ENCODE measurements at regions of chr3 and their contacts with region 1.

Region 1: DNA sequence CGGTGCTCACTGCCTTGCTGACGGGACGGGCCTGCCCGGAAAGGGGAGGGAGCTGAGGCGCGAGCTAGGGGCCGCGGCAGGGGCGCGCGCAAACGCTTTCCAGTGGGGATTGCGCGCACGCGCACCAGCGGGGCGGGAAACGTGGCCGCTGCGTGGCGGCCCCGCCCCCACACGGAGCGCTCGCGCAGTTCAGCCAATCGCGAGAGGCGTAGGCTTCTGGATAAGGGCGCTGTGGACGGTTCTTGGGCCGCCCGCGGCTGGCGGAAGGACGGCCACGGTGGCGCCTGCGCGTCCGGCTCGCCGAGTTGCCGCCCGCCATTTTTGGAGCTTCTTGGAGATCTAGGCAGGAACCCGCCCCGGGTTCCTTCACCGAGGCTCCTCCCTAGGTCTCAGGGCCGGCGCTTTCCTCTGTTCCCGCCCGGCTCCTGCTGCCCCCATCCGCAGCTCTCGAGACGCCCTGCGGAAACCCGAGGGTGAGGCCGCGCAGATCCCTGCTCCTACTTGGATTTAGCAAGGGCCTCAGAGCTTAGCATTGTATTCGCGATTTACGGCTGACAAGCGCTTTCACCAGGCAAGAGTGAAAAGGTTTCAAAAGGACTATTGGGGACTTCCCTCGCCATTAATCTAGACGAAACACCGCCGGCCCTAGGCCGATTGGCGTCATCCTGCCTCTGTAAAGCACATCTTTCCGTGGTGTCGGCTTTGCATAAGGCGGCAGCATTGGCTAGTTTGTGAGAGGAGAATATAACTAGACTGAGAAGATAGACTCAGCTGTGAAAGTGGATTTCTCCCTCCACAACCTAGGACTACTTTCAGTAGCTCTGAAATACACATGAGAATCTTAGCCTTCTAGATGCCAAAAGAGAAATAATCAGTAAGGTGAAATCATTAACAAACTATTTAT is 496 bp upstream of the STAG1 start:
- DNase-seq: peak; percentile 99
- H3K4me3 Mint-ChIP-seq: peak overlapping the region; percentile 77
- H3K27ac Mint-ChIP-seq: peak overlapping the region; percentile 92
- H3K4me1 Mint-ChIP-seq: peaks cover 36% of the 10 kb centered on the region
- H3K27me3 Mint-ChIP-seq: no peaks in the 10 kb centered on the region

Region 2: DNA sequence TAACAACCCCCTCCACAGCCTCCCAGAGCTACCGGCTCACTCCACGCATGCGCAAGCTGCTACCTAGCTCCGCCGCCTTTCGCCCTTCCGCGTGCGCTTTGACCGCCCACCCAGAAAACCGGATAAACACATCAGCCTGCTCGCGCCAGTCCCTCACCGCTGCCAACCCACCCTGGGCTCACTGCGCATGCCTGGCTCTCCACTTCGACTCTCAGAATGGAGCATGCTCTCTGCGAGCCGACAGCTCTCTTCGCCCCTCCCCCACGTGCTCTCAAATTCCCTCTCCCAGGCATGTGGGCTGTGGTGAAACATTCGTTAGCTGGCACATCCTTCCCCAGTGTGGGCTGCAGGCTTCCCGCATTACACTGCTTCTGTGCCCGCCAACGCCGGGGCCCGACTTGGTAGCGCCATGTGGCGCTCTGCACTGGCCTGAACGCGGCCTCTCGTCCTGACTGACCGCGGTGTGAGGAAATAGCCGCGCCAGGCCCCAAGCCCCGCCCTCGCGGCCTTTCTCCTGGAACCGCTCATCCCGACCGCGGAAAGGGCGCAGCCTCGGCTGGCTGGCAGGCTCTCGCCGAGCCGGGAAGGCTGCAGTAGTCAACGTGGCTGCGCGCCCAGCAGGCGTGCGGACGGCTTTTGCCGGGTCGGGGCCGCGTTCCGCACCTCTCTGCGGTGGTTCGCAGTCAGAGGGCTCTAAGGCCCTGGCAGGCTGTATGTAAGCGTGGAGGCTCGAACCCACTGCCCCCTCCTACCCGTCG is 556.1 kb before region 1 on chr3:
- CTCF ChIA-PET with region 1: interaction called, 27 read pairs
- POLR2A ChIA-PET with region 1: interaction called, 46 read pairs
- intact Hi-C with region 1: loop called (anchors 1 kb)
- DNase-seq: peak; percentile 100
- H3K4me3 Mint-ChIP-seq: peak overlapping the region; percentile 95
- H3K27ac Mint-ChIP-seq: peak overlapping the region; percentile 99
- H3K4me1 Mint-ChIP-seq: peaks cover 18% of the 10 kb centered on the region
- H3K27me3 Mint-ChIP-seq: peaks cover 5% of the 10 kb centered on the region

Region 3: DNA sequence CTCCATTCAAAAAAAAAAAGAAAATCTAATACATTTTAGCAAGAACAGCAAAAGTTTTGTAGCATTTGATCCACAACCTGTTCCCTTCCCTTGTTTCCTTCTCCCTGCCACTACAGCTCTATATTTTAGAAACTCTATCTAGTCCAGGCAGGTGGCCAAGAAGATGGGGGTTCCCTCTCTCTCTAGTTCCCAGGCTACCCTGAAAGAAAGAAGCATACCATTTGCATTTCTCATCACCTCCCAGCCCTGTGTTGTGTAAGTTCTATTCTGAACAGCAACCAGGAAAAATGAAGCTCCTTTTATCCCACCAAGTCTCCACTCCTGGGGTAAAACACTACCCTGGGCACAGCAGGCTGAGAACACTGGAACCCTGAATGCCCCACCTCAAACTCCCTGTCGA is 402.5 kb before region 1 on chr3:
- CTCF ChIA-PET with region 1: interaction called, 3 read pairs
- POLR2A ChIA-PET with region 1: interaction called, 4 read pairs
- intact Hi-C with region 1: loop called (anchors 1 kb)
- DNase-seq: no peak
- H3K4me3 Mint-ChIP-seq: no peak overlapping the region
- H3K27ac Mint-ChIP-seq: no peak overlapping the region
- H3K4me1 Mint-ChIP-seq: peaks cover 14% of the 10 kb centered on the region
- H3K27me3 Mint-ChIP-seq: no peaks in the 10 kb centered on the region

Region 4: DNA sequence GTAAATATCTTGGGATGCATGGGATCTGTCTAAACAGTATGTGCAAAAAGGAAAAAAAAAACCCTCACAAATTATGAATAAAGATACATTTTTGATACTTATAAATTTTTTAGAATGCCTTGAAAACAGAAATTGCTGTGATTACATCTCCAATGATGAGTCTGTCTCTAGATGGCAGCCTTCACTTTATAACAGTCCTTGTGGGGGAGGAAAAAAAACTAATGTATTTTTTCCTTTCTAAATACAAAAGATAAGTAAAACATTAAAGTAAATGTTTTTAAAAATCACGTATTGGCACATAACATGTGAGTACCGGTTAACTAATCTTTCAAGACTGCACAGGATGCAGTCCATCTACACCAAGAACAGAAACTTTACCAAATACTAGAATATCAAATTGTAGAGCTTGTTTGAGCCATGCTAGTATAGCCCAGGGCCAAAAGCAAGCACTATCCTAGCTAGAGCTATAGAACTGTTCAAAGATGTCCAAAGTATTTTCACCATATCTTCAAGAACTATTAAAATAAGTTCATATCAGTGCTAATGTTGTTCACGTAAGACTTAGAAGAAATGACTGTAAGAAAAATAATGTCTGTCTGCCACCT is 206.9 kb before region 1 on chr3:
- CTCF ChIA-PET with region 1: interaction called, 16 read pairs
- POLR2A ChIA-PET with region 1: no interaction called
- intact Hi-C with region 1: loop called (anchors 1 kb)
- DNase-seq: no peak
- H3K4me3 Mint-ChIP-seq: no peak overlapping the region
- H3K27ac Mint-ChIP-seq: no peak overlapping the region
- H3K4me1 Mint-ChIP-seq: peaks cover 23% of the 10 kb centered on the region
- H3K27me3 Mint-ChIP-seq: no peaks in the 10 kb centered on the region

Region 5: GRCh38 chr3:136787349-136787748 is 34.7 kb after region 1 on chr3:
- CTCF ChIA-PET with region 1: interaction called, 7 read pairs
- POLR2A ChIA-PET with region 1: no interaction called
- intact Hi-C with region 1: loop called (anchors 2 kb)
- DNase-seq: peak; percentile 56
- H3K4me3 Mint-ChIP-seq: no peak overlapping the region
- H3K27ac Mint-ChIP-seq: no peak overlapping the region
- H3K4me1 Mint-ChIP-seq: peaks cover 14% of the 10 kb centered on the region
- H3K27me3 Mint-ChIP-seq: no peaks in the 10 kb centered on the region

Region 6: GRCh38 chr3:136919799-136920580 is 167.3 kb after region 1 on chr3:
- CTCF ChIA-PET with region 1: no interaction called
- POLR2A ChIA-PET with region 1: no interaction called
- intact Hi-C with region 1: loop called (anchors 5 kb)
- DNase-seq: no peak
- H3K4me3 Mint-ChIP-seq: no peak overlapping the region
- H3K27ac Mint-ChIP-seq: peak overlapping the region; percentile 68
- H3K4me1 Mint-ChIP-seq: peaks cover 78% of the 10 kb centered on the region
- H3K27me3 Mint-ChIP-seq: no peaks in the 10 kb centered on the region

Measured in activated CD4-positive, alpha-beta memory T cell treated with anti-CD3 and anti-CD28 coated beads for 36 hours (primary cell).